Right ventricle myocardium inferior (tissue), 1 donor: ENCODE measurements at regions of chr2 and their contacts with region 1.

Region 1: DNA sequence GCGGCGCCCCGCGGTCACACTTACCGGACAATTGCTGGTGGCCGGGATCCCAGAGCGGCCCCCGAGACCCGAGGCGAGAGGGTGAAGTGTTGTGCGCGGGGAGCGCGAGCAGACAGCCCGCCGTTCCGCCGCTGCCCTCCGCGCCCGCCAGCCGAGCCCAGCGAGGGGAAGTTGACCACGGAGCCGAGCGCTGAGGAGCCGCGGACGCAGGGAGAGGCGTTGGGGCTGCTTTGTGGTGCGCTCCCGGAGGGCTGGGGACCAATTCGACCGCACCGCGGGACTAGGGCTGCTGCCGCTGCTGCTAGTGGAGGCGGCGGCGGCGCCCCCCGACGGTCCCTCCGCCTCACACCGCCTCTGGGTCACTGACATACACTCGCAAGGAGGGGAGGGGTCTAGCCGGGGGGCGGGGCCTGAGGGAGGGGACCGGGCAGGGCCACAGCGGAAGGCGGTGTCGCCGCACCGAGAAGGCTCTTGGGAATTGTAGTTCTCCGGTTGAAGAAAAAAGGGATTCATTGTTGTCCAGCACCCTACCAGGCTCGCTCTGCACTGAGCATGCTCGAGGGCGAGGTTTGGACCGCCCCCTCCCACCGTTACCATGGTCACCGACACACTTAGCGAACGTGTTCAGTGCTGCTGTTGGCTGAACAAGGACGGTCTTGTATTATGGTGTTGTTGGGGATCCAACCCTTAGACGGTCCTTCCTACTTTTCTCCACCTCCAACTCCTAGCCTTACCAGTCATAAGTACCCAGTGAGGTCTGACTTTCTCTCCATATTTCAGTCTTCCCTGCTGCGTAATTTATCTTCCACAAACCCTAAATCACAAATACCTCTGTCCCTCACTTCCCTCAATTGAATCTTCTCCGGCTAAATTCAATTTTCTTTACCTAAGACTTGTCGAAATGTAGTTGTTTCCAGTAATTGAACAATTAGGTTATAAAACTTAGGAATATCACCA is at the start of gene PELI1:
- DNase-seq: peak; percentile 96
- ATAC-seq: peak; percentile 99
- total RNA-seq, gene PELI1: 6.3 TPM

Region 2: GRCh38 chr2:64000630-64001381 is 143.5 kb before region 1 on chr2:
- intact Hi-C with region 1: no loop called
- DNase-seq: peak; percentile 42
- ATAC-seq: no peak

Region 3: GRCh38 chr2:64052468-64053241 is 91.7 kb before region 1 on chr2:
- intact Hi-C with region 1: loop called (anchors 5 kb)
- DNase-seq: no peak
- ATAC-seq: no peak

Region 4: DNA sequence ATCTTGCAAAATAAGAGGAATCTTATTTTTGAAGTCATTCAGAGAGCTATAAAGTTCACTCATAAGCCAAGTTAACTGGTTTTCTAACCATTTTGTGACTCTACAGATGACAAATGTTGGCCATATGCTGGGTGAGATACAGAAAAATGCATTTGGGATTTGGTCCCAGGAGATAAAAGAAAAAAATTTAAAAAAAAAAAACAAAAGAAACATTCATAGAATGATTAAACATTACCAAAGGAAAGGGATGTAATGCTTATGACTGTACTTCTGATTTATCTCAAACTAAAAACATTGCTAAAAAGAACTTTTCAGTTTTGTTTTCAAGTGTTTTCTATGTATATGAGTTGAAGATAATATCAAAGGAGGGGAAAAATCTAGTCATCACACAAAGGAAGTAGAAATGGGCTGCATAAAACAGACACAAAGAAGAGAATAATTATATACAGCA is 43.2 kb before region 1 on chr2:
- intact Hi-C with region 1: no loop called
- DNase-seq: no peak
- ATAC-seq: no peak

Region 5: DNA sequence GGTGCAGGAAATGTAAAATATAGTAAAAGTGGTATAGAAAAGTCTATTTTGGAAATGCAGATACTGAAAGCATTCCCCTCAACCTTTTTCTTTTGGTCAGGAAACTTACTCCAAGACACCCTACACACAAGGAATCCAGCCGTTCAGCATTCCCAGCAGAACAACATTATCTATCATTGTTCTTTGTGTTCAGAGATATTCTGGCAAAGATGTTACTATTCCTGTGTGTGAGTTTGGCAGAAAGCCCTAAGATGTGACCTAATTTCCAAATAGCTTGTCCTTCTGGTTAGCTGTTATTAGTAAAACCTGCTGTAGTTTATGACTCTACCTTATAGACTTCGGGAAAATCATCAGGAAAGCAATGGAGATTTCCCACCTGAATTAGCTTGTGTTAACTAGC is 78.0 kb after region 1 on chr2:
- intact Hi-C with region 1: loop called (anchors 5 kb)
- DNase-seq: no peak
- ATAC-seq: peak; percentile 66

Region 6: GRCh38 chr2:64273524-64274398 is 129.4 kb after region 1 on chr2:
- intact Hi-C with region 1: loop called (anchors 5 kb)
- DNase-seq: no peak
- ATAC-seq: peak; percentile 90

Region 7: DNA sequence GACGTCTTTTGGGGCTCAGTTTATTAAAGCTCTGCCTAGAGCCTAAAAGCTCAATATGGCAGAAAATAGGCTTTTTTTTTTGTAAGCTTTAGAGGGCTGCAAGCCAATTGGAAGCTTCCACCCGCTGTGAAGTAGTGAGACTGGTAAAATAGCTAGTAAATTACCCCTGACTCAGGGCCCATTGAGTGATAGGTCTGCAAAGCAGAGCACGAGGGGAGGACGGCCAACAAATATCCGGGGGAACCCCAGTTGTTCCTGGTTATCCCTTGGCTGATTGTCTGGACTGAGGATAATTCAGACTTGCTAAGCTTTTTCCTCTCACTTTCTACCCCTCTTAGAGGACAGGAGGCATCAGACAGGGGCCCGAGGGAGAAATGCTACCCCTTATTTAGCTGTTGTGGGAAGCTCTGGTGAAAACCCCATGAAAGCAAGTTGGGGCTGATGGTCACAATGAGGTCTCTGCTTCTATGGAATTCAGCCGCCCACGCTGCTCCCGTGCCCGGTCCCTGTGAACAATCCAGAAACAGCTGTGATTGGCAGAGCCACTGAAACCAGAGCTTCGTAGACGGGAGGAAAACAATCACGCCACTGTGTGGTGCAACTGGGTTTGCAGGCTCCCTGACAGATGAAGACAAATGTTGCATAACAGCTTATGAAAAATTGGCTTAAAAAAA is 167.8 kb after region 1 on chr2:
- intact Hi-C with region 1: loop called (anchors 2 kb)
- DNase-seq: peak; percentile 86
- ATAC-seq: peak; percentile 93